GM12878 (cell line): ENCODE measurements at regions of chr13 and their contacts with region 1.

Region 1: DNA sequence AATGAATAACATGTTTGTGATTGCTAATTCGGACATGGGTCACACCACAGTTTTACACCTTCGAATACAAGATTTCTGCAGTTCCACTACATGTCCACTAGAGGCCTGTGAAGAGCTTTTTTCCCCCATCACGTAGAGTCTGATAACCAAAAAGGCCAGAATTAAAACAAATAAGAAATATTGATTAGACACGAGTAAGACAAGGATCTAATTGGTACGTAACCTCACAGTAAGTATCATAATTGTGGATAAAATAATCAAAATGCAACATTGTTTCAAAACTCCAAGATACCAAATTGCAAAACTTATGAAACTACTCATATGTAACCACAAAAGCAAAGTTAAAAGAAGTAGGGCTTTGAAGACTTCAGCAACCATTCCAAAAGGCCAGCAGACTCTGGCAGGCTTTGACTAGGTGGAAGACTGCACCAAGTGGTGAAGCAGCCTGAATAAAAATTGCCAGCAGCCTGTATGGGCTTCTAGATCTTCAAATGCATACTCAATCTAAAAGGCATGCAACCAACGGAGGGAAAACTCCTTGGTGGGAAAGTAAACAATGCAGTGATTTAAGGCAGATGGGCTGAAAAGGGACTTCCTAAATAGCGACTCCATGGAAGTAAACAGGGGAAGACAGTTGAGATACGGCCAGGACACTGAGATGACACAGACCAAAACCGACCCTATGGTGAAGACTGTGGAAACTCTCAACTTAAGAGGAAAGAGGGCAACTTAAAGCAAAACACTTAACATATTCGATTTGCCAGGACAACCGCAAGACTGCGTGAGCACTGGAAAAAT is 56.7 kb downstream of the STARD13 start:
- DNase-seq: no peak
- ATAC-seq: peak; percentile 94
- H3K4me3 ChIP-seq: no peak overlapping the region
- H3K27ac ChIP-seq: no peak overlapping the region
- H3K4me1 ChIP-seq: no peaks in the 10 kb centered on the region
- H3K27me3 ChIP-seq: no peaks in the 10 kb centered on the region
- CTCF ChIP-seq: peak; percentile 83 to 98 (median 94)
- EP300 ChIP-seq: no peak
- POLR2A ChIP-seq: no peak
- RAD21 ChIP-seq: peak; percentile 98

Region 2: GRCh38 chr13:32947411-32948276 is 281.2 kb before region 1 on chr13:
- CTCF ChIA-PET with region 1: no interaction called
- POLR2A ChIA-PET with region 1: no interaction called
- RAD21 ChIA-PET with region 1: no interaction called
- SMC1A ChIA-PET with region 1: no interaction called
- in situ Hi-C with region 1: no loop called
- intact Hi-C with region 1: no loop called
- DNase-seq: no peak
- ATAC-seq: no peak
- H3K4me3 ChIP-seq: no peak overlapping the region
- H3K27ac ChIP-seq: no peak overlapping the region
- H3K4me1 ChIP-seq: no peaks in the 10 kb centered on the region
- H3K27me3 ChIP-seq: no peaks in the 10 kb centered on the region
- CTCF ChIP-seq: no peak
- EP300 ChIP-seq: no peak
- POLR2A ChIP-seq: no peak
- RAD21 ChIP-seq: no peak

Region 3: GRCh38 chr13:33218001-33218400 is 10.8 kb before region 1 on chr13:
- CTCF ChIA-PET with region 1: interaction called, 10 read pairs
- POLR2A ChIA-PET with region 1: interaction called, 8 read pairs
- RAD21 ChIA-PET with region 1: interaction called, 4 read pairs
- SMC1A ChIA-PET with region 1: interaction called, 12 read pairs
- in situ Hi-C with region 1: no loop called
- intact Hi-C with region 1: no loop called
- DNase-seq: no peak
- ATAC-seq: no peak
- H3K4me3 ChIP-seq: no peak overlapping the region
- H3K27ac ChIP-seq: no peak overlapping the region
- H3K4me1 ChIP-seq: no peaks in the 10 kb centered on the region
- H3K27me3 ChIP-seq: no peaks in the 10 kb centered on the region
- CTCF ChIP-seq: no peak
- EP300 ChIP-seq: no peak
- POLR2A ChIP-seq: no peak
- RAD21 ChIP-seq: no peak

Region 4: GRCh38 chr13:33487575-33488243 is 258.9 kb after region 1 on chr13:
- CTCF ChIA-PET with region 1: interaction called, 7 read pairs
- POLR2A ChIA-PET with region 1: no interaction called
- RAD21 ChIA-PET with region 1: interaction called, 8 read pairs
- SMC1A ChIA-PET with region 1: interaction called, 5 read pairs
- in situ Hi-C with region 1: no loop called
- intact Hi-C with region 1: loop called (anchors 1 kb)
- DNase-seq: peak; percentile 27
- ATAC-seq: peak; percentile 75
- H3K4me3 ChIP-seq: no peak overlapping the region
- H3K27ac ChIP-seq: no peak overlapping the region
- H3K4me1 ChIP-seq: no peaks in the 10 kb centered on the region
- H3K27me3 ChIP-seq: no peaks in the 10 kb centered on the region
- CTCF ChIP-seq: peak; percentile 23 to 34 (median 23); a peak in 4 of 6 replicates
- EP300 ChIP-seq: no peak
- POLR2A ChIP-seq: no peak
- RAD21 ChIP-seq: peak; percentile 64

Region 5: DNA sequence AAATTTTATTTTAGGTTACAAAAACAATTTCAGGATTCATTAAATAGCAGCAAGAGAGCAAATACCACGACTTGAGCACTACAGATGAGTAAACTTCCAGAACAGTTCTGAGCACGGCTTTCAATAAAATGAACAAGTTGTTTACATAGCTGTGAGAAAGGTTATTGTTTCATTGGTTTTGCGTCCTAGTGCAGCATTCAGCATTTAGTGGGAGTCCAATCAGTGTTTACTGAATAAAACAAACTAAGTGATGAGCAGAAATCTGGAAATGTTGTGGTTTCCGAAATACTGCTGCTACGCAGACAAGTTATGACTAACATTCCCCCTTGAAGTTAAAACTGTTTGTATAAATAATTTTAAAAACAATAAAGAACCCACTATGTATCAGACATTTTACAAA is 308.2 kb after region 1 on chr13:
- CTCF ChIA-PET with region 1: interaction called, 6 read pairs
- POLR2A ChIA-PET with region 1: interaction called, 4 read pairs
- RAD21 ChIA-PET with region 1: interaction called, 11 read pairs
- SMC1A ChIA-PET with region 1: interaction called, 3 read pairs
- in situ Hi-C with region 1: no loop called
- intact Hi-C with region 1: loop called (anchors 1 kb)
- DNase-seq: no peak
- ATAC-seq: peak; percentile 38
- H3K4me3 ChIP-seq: no peak overlapping the region
- H3K27ac ChIP-seq: peak overlapping the region; percentile 72
- H3K4me1 ChIP-seq: peaks cover 6% of the 10 kb centered on the region
- H3K27me3 ChIP-seq: no peaks in the 10 kb centered on the region
- CTCF ChIP-seq: no peak
- EP300 ChIP-seq: no peak
- POLR2A ChIP-seq: no peak
- RAD21 ChIP-seq: no peak